Sciatic nerve (tissue), 2 donors: ENCODE measurements at regions of chr4 and their contacts with region 1.

Region 1: DNA sequence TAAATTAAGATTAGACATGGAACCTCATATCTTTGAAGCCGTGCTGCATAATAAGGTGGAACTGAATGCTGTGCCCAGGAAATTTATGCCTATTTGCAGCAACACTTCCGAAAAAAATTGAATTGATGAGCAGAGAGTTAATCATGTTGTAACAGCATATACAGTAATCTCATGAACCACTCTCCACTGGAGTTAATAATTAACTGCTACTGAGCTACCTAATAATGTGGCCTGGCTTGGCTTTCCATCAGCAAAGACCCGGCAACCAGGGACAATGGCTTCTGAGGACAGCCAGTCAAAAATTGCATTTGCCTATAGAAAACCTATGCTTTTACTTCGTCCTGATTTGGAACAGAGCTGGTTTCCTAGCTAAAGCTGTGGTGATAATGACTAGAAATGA is 63.8 kb upstream of the GATB start:
- DNase-seq: no peak
- ATAC-seq: no peak

Region 2: DNA sequence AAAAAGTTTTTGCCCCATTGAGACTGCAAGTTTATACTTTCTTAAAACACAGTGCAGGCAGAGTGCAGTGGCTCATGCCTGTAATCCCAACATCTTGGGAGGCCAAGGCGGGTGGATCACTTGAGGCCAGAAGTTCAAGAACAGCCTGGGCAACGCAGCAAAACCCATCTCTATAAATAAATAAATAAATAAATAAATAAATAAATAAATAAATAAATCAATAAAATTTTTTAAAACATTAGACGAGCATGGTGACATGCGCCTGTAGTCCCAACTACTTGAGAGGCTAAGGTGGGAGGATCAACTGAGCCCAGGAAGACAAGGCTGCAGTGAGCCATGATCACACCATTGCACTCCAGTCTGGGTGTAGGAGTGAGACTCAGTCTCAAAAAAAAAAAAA is 1022.8 kb before region 1 on chr4:
- intact Hi-C with region 1: loop called (anchors 5 kb)
- DNase-seq: no peak
- ATAC-seq: no peak